Naive thymus-derived CD4-positive, alpha-beta T cell (primary cell): ENCODE measurements at regions of chr18 and their contacts with region 1.

Region 1: DNA sequence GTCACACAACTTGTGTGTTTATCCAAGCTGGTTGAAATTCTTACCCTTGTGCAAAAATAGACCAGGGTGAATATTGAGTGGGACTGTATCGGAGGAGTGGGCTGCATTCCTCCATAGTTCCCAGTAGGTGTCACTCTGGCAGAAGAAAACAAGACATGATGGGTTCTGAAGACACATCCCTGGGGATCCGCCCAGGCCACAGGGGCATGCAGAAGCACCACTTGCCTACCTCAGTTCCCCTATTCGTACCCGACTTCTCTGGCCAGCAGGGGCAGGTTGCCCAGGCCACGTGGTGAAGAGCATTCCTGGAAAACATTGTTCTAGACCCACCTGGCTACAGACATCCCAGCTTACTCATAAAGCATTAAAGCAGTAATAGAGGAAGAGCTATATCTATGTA is 168.2 kb downstream of the FAM210A start:
- DNase-seq: peak in 2 of 9 donors; percentile 7 to 16
- ATAC-seq: peak; percentile 69
- H3K4me3 ChIP-seq: no peak overlapping the region
- H3K4me3 Mint-ChIP-seq: peak overlapping the region in 1 of 10 donors; percentile 52
- H3K27ac ChIP-seq: no peak overlapping the region
- H3K27ac Mint-ChIP-seq: peak overlapping the region in 3 of 9 donors; percentile 60 to 84 (median 82)
- H3K4me1 ChIP-seq: peaks cover 0 to 6% of the 10 kb centered on the region in 2 donors
- H3K4me1 Mint-ChIP-seq: peaks cover 11 to 44% (median 29%) of the 10 kb centered on the region in 7 donors
- H3K27me3 ChIP-seq: no peaks in the 10 kb centered on the region
- H3K27me3 Mint-ChIP-seq: no peaks in the 10 kb centered on the region

Region 2: GRCh38 chr18:13483316-13484270 is 74.5 kb before region 1 on chr18:
- CTCF ChIA-PET with region 1: no interaction called
- POLR2A ChIA-PET with region 1: no interaction called
- intact Hi-C with region 1: no loop called
- DNase-seq: peak in 1 of 9 donors; percentile 27
- ATAC-seq: no peak
- H3K4me3 ChIP-seq: no peak overlapping the region
- H3K4me3 Mint-ChIP-seq: peak overlapping the region in 2 of 10 donors; percentile 16 to 44
- H3K27ac ChIP-seq: peak overlapping the region; percentile 50
- H3K27ac Mint-ChIP-seq: peak overlapping the region in 8 of 9 donors; percentile 81 to 94 (median 88)
- H3K4me1 ChIP-seq: no peaks in the 10 kb centered on the region
- H3K4me1 Mint-ChIP-seq: peaks cover 23 to 69% (median 43%) of the 10 kb centered on the region in 7 donors
- H3K27me3 ChIP-seq: no peaks in the 10 kb centered on the region
- H3K27me3 Mint-ChIP-seq: no peaks in the 10 kb centered on the region

Region 3: GRCh38 chr18:13577091-13577697 is 19.1 kb after region 1 on chr18:
- CTCF ChIA-PET with region 1: no interaction called
- POLR2A ChIA-PET with region 1: interaction called, 3 read pairs
- intact Hi-C with region 1: loop called in 1 of 2 experiments (anchors 2 kb)
- DNase-seq: no peak
- ATAC-seq: peak; percentile 80
- H3K4me3 ChIP-seq: no peak overlapping the region
- H3K4me3 Mint-ChIP-seq: peak overlapping the region; percentile 34 to 76 (median 59)
- H3K27ac ChIP-seq: no peak overlapping the region
- H3K27ac Mint-ChIP-seq: peak overlapping the region; percentile 7 to 90 (median 52)
- H3K4me1 ChIP-seq: peaks cover 5 to 13% of the 10 kb centered on the region in 2 donors
- H3K4me1 Mint-ChIP-seq: peaks cover 36 to 60% (median 55%) of the 10 kb centered on the region in 7 donors
- H3K27me3 ChIP-seq: no peaks in the 10 kb centered on the region
- H3K27me3 Mint-ChIP-seq: no peaks in the 10 kb centered on the region

Region 4: GRCh38 chr18:13629841-13630715 is 72.0 kb after region 1 on chr18:
- CTCF ChIA-PET with region 1: no interaction called
- POLR2A ChIA-PET with region 1: no interaction called
- intact Hi-C with region 1: loop called (anchors 1 kb)
- DNase-seq: peak in 8 of 9 donors; percentile 34 to 62 (median 56)
- ATAC-seq: peak; percentile 87
- H3K4me3 ChIP-seq: no peak overlapping the region
- H3K4me3 Mint-ChIP-seq: no peak overlapping the region
- H3K27ac ChIP-seq: no peak overlapping the region
- H3K27ac Mint-ChIP-seq: peak overlapping the region in 5 of 9 donors; percentile 1 to 58 (median 18)
- H3K4me1 ChIP-seq: no peaks in the 10 kb centered on the region
- H3K4me1 Mint-ChIP-seq: peaks cover 2 to 26% (median 14%) of the 10 kb centered on the region in 7 donors
- H3K27me3 ChIP-seq: no peaks in the 10 kb centered on the region
- H3K27me3 Mint-ChIP-seq: no peaks in the 10 kb centered on the region

Region 5: GRCh38 chr18:13762690-13763439 is 204.7 kb after region 1 on chr18:
- CTCF ChIA-PET with region 1: no interaction called
- POLR2A ChIA-PET with region 1: no interaction called
- intact Hi-C with region 1: no loop called
- DNase-seq: no peak
- ATAC-seq: no peak
- H3K4me3 ChIP-seq: no peak overlapping the region
- H3K4me3 Mint-ChIP-seq: no peak overlapping the region
- H3K27ac ChIP-seq: no peak overlapping the region
- H3K27ac Mint-ChIP-seq: no peak overlapping the region
- H3K4me1 ChIP-seq: no peaks in the 10 kb centered on the region
- H3K4me1 Mint-ChIP-seq: peaks cover 0 to 6% (median 0%) of the 10 kb centered on the region in 7 donors
- H3K27me3 ChIP-seq: no peaks in the 10 kb centered on the region
- H3K27me3 Mint-ChIP-seq: no peaks in the 10 kb centered on the region

Region 6: GRCh38 chr18:13800505-13801259 is 242.6 kb after region 1 on chr18:
- CTCF ChIA-PET with region 1: no interaction called
- POLR2A ChIA-PET with region 1: no interaction called
- intact Hi-C with region 1: loop called in 1 of 2 experiments (anchors 2 kb)
- DNase-seq: peak in 7 of 9 donors; percentile 6 to 54 (median 36)
- ATAC-seq: peak; percentile 54
- H3K4me3 ChIP-seq: no peak overlapping the region
- H3K4me3 Mint-ChIP-seq: peak overlapping the region in 9 of 10 donors; percentile 39 to 77 (median 66)
- H3K27ac ChIP-seq: no peak overlapping the region
- H3K27ac Mint-ChIP-seq: no peak overlapping the region
- H3K4me1 ChIP-seq: peaks cover 0 to 6% of the 10 kb centered on the region in 2 donors
- H3K4me1 Mint-ChIP-seq: peaks cover 3 to 9% (median 5%) of the 10 kb centered on the region in 7 donors
- H3K27me3 ChIP-seq: peaks cover 0 to 9% of the 10 kb centered on the region in 2 donors
- H3K27me3 Mint-ChIP-seq: peaks cover 67 to 76% (median 72%) of the 10 kb centered on the region in 5 donors

Region 7: GRCh38 chr18:13813271-13813849 is 255.2 kb after region 1 on chr18:
- CTCF ChIA-PET with region 1: interaction called, 7 read pairs
- POLR2A ChIA-PET with region 1: no interaction called
- intact Hi-C with region 1: loop called in 1 of 2 experiments (anchors 5 kb)
- DNase-seq: peak in 8 of 9 donors; percentile 14 to 51 (median 30)
- ATAC-seq: peak; percentile 82
- H3K4me3 ChIP-seq: no peak overlapping the region
- H3K4me3 Mint-ChIP-seq: no peak overlapping the region
- H3K27ac ChIP-seq: no peak overlapping the region
- H3K27ac Mint-ChIP-seq: peak overlapping the region in 1 of 9 donors; percentile 80
- H3K4me1 ChIP-seq: no peaks in the 10 kb centered on the region
- H3K4me1 Mint-ChIP-seq: peaks cover 0 to 4% (median 0%) of the 10 kb centered on the region in 7 donors
- H3K27me3 ChIP-seq: no peaks in the 10 kb centered on the region
- H3K27me3 Mint-ChIP-seq: peaks cover 0 to 13% (median 4%) of the 10 kb centered on the region in 5 donors